ENCODE measurements at regions of chr9 and their contacts with region 1.

Region 1: GRCh38 chr9:36560857-36561221 is 11.9 kb upstream of the MELK start:
- DNase-seq: no peak
- H3K4me3 ChIP-seq: no peak overlapping the region
- H3K27ac ChIP-seq: no peak overlapping the region
- H3K4me1 ChIP-seq: no peaks in the 10 kb centered on the region
- H3K27me3 ChIP-seq: no peaks in the 10 kb centered on the region
- CTCF ChIP-seq: no peak
- EP300 ChIP-seq: no peak
- POLR2A ChIP-seq: no peak

Region 2: DNA sequence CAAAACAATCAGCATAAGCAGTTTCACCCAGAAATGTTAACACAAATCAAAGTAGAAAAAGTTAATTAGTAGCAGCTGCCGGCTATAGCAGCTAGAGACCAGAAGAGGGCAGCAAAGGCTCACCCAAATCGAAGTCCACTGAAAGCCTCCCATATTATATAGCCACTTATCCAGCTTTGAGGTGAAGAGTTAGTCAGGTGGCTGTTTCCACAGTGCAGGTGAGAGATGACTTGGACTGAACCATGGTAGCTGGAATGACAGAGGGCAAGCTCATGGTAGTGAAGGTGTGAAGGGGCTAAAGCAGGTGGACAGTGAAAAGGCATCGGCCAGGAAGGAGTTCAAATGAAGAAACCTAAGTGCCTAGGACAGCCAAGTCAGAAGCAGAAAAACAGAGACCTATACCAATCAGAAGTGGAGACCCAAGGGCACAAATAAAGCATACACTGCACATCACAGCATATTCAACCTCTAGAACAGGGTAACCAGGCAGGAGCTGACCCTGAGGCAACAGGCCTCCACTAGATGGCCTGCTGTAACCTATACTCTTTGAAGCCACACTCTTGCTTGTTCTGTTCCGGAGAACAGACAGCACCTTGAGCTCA is 153.6 kb before region 1 on chr9:
- in situ Hi-C with region 1: loop called in 3 of 4 experiments (anchors 5 to 10 kb)
- intact Hi-C with region 1: no loop called
- DNase-seq: peak; percentile 54
- H3K4me3 ChIP-seq: no peak overlapping the region
- H3K27ac ChIP-seq: peak overlapping the region in 2 of 4 donors; percentile 27 to 40
- H3K4me1 ChIP-seq: peaks cover 0 to 16% (median 0%) of the 10 kb centered on the region in 4 donors
- H3K27me3 ChIP-seq: no peaks in the 10 kb centered on the region
- CTCF ChIP-seq: peak; percentile 90 to 97 (median 94)
- EP300 ChIP-seq: no peak
- POLR2A ChIP-seq: no peak